Endothelial cell of umbilical vein (primary cell): ENCODE measurements at regions of chr5 and their contacts with region 1.

Region 1: DNA sequence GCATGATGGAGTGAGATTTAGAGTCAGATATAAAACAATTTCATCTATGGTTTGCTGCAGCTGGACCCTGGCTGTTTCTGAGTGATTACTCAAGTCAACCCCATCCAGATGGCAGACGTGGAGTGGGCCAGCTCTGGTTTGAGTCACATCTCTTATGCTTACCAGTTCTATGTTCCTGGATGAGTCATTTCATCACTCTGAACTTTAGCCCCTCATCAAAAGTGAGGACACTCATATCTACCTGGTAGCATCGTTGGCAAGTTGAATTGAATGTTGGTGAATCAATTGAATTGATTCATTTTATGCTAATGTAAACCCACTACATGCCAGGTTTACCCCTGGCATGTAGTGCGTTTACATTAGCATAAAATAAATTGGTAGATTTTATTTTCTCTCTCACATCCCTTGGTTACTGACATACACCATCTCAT is 176.4 kb downstream of the FGF18 start:
- DNase-seq: peak; percentile 79
- H3K4me3 ChIP-seq: no peak overlapping the region
- H3K27ac ChIP-seq: peak overlapping the region; percentile 63
- H3K4me1 ChIP-seq: peaks cover 22% of the 10 kb centered on the region
- H3K27me3 ChIP-seq: peaks cover 0 to 2% of the 10 kb centered on the region in 2 experiments
- CTCF ChIP-seq: no peak
- POLR2A ChIP-seq: no peak

Region 2: DNA sequence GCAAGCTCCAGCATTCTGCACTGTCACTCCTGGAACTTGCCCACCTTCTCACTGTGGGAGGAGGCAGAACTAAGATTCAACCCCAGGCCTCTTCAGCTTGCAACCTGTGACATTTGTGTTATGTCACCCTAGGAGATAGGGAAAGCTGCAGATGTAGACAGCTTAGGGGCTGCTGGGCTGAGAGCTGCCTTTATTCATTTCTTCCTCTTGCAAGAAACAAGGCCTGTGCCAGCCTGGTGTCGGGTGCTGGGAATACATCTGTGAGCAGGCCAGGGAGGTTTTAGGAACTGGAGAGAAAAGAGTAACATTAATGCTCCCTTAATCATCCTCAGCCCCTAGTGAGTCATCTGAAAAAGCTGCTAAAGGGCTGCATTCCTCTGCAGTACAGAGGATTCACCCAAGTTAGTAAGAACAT is 74.6 kb before region 1 on chr5:
- CTCF ChIA-PET with region 1: interaction called, 5 read pairs
- POLR2A ChIA-PET with region 1: no interaction called
- dilution Hi-C with region 1: no loop called
- intact Hi-C with region 1: loop called (anchors 5 kb)
- DNase-seq: peak; percentile 32
- H3K4me3 ChIP-seq: no peak overlapping the region
- H3K27ac ChIP-seq: no peak overlapping the region
- H3K4me1 ChIP-seq: peaks cover 13% of the 10 kb centered on the region
- H3K27me3 ChIP-seq: peaks cover 0 to 2% of the 10 kb centered on the region in 2 experiments
- CTCF ChIP-seq: no peak
- POLR2A ChIP-seq: no peak

Region 3: GRCh38 chr5:171555160-171555559 is 40.7 kb before region 1 on chr5:
- CTCF ChIA-PET with region 1: no interaction called
- POLR2A ChIA-PET with region 1: no interaction called
- dilution Hi-C with region 1: no loop called
- intact Hi-C with region 1: no loop called
- DNase-seq: no peak
- H3K4me3 ChIP-seq: no peak overlapping the region
- H3K27ac ChIP-seq: no peak overlapping the region
- H3K4me1 ChIP-seq: no peaks in the 10 kb centered on the region
- H3K27me3 ChIP-seq: peaks cover 4 to 9% of the 10 kb centered on the region in 2 experiments
- CTCF ChIP-seq: no peak
- POLR2A ChIP-seq: no peak

Region 4: GRCh38 chr5:171569065-171569712 is 26.6 kb before region 1 on chr5:
- CTCF ChIA-PET with region 1: no interaction called
- POLR2A ChIA-PET with region 1: interaction called, 5 read pairs
- dilution Hi-C with region 1: no loop called
- intact Hi-C with region 1: loop called (anchors 1 kb)
- DNase-seq: peak; percentile 54
- H3K4me3 ChIP-seq: no peak overlapping the region
- H3K27ac ChIP-seq: no peak overlapping the region
- H3K4me1 ChIP-seq: peaks cover 18% of the 10 kb centered on the region
- H3K27me3 ChIP-seq: peaks cover 0 to 2% of the 10 kb centered on the region in 2 experiments
- CTCF ChIP-seq: no peak
- POLR2A ChIP-seq: no peak

Region 5: GRCh38 chr5:171580502-171581265 is 15.1 kb before region 1 on chr5:
- CTCF ChIA-PET with region 1: no interaction called
- POLR2A ChIA-PET with region 1: interaction called, 6 read pairs
- dilution Hi-C with region 1: no loop called
- intact Hi-C with region 1: loop called (anchors 1 kb)
- DNase-seq: no peak
- H3K4me3 ChIP-seq: no peak overlapping the region
- H3K27ac ChIP-seq: no peak overlapping the region
- H3K4me1 ChIP-seq: no peaks in the 10 kb centered on the region
- H3K27me3 ChIP-seq: peaks cover 3 to 5% of the 10 kb centered on the region in 2 experiments
- CTCF ChIP-seq: no peak
- POLR2A ChIP-seq: no peak

Region 6: DNA sequence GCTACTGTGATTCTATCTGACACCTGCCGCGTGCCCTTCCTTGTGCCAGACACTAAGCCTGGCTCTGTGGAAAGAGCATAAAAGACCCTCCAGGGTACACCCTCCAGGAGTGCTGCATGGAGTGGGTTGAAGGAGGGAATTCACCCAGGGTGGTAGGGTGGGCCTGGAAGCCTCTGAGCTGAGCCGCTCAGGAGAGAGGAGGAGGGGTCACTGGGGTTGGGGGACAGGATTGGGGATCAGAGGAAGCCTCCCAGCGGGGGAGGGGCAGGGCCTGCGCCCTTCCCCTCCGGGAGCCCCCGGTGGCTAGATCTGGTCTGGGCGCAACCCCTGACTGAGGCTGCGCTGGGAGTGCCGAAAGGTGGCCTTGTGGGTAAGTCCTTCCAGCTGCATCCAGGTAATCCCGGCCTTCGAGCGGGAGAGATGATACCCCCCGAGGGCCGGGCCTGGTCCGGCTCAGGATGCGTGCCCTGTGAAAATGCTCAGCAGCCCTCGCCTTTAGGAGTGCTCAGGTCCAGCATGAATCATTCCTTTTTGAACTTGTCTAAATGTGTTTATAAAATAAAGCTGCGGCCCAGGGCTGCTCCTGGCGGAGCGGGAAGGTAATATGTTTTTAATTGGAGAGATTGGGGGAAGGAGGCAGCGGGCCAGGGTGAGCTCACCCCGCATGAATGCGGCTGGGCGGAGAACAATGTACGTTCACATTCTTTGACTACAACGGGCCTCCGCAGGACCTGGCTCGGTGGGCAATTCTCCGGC is 71.7 kb after region 1 on chr5:
- CTCF ChIA-PET with region 1: interaction called, 4 read pairs
- POLR2A ChIA-PET with region 1: no interaction called
- dilution Hi-C with region 1: no loop called
- intact Hi-C with region 1: loop called (anchors 5 kb)
- DNase-seq: peak; percentile 88
- H3K4me3 ChIP-seq: no peak overlapping the region
- H3K27ac ChIP-seq: peak overlapping the region; percentile 78
- H3K4me1 ChIP-seq: peaks cover 12% of the 10 kb centered on the region
- H3K27me3 ChIP-seq: no peaks in the 10 kb centered on the region
- CTCF ChIP-seq: peak; percentile 12 to 22
- POLR2A ChIP-seq: no peak